ENCODE measurements at regions of chr15 and their contacts with region 1.

Region 1: DNA sequence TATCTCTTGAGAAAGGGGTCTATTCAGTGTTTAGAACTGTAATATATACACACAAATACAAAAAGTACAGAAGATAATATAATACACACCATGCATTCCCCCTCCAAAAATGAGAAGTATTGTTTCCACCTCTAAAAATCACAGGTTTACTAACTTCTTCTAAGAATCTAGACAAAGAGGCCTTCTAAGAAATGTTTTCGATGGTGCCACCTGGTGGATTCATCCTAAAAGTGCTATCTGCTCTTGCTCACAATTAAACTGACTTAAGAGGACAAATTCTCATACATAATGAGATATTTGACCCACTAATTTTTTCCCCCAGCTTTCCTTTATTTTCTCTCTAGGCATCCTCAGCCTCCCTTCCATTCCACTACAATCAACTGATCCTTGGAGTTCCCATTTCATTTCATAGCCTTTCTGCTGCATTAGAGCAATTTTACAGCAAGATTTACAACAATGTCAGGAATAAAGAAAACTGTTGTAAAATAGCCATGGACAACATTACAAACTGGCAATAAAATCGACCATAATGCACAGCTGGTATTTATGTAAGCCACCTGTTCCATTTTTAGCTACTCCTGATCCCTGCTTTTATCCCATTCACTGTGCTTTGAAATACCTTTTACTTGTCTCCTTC is 124.6 kb downstream of the ARRDC4 start:
- DNase-seq: peak; percentile 74
- H3K4me3 Mint-ChIP-seq: no peak overlapping the region
- H3K27ac Mint-ChIP-seq: no peak overlapping the region
- H3K4me1 Mint-ChIP-seq: no peaks in the 10 kb centered on the region
- H3K27me3 Mint-ChIP-seq: no peaks in the 10 kb centered on the region
- CTCF ChIP-seq: peak; percentile 53

Region 2: DNA sequence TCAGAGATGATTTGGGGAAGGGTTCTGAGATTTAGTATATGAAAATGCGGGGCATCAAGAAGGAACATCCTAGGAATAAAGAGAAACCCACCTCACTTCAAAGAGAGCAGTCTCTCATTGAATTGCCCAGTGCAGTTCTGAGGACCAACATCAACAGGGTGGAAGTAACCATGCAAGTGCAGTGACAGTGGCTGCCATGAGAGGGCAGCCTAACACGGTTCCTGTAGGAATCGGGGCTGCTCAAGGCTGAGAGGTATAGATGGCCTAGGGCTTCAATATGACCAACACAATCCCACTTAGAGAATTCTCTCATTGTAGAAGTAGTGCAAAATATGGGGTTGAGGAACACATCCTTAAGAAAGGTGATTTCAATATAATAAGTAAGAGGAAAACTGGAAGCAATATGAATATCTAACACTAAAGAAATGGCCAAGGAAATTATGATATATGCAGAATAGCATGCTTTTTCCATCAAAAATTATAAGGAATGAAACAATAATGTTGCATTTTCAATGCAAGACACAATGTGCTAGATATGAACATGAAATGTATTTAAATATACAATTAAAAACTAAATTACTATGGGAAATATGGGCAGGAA is 175.7 kb before region 1 on chr15:
- CTCF ChIA-PET with region 1: interaction called, 37 read pairs
- POLR2A ChIA-PET with region 1: no interaction called
- intact Hi-C with region 1: loop called (anchors 1 kb)
- DNase-seq: peak; percentile 66
- H3K4me3 Mint-ChIP-seq: no peak overlapping the region
- H3K27ac Mint-ChIP-seq: no peak overlapping the region
- H3K4me1 Mint-ChIP-seq: peaks cover 8% of the 10 kb centered on the region
- H3K27me3 Mint-ChIP-seq: no peaks in the 10 kb centered on the region
- CTCF ChIP-seq: peak; percentile 93

Measured in MCF 10A (cell line).